Pancreas (tissue), 10 donors: ENCODE measurements at regions of chr10 and their contacts with region 1.

Region 1: DNA sequence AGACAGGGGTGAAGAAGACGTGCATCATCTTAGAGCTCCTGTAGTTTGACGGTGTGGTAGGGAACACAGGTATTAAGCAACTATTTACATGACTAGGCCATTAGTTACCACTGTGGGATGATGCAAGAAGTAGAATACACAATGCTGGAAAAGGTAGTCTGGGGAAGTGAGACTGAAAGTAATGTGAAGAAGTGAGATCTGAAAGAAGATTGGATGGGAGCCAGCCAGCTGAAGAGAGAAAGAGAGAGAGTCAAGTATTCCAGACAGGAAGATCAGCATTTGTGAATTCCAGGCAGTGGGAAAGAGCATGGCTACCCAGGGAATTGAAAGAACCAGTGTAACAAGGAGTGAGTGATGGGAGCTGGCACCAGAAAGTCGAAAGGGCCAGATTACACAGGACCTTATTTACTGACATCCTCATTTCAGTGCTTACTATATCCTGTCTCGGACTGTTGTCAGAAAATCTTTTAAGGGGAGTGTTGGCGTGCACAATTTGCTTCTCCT is 4.0 kb upstream of the CFAP58 start:
- DNase-seq: no peak
- ATAC-seq: peak in 2 of 4 donors; percentile 26 to 53
- H3K4me3 ChIP-seq: no peak overlapping the region
- H3K27ac ChIP-seq: peak overlapping the region in 1 of 4 donors; percentile 33
- H3K4me1 ChIP-seq: peaks cover 0 to 12% (median 0%) of the 10 kb centered on the region in 3 donors
- H3K27me3 ChIP-seq: no peaks in the 10 kb centered on the region
- CTCF ChIP-seq: no peak

Region 2: GRCh38 chr10:104281694-104282093 is 68.0 kb before region 1 on chr10:
- intact Hi-C with region 1: loop called in 1 of 3 experiments (anchors 5 kb)
- DNase-seq: no peak
- ATAC-seq: no peak
- H3K4me3 ChIP-seq: no peak overlapping the region
- H3K27ac ChIP-seq: no peak overlapping the region
- H3K4me1 ChIP-seq: no peaks in the 10 kb centered on the region
- H3K27me3 ChIP-seq: no peaks in the 10 kb centered on the region
- CTCF ChIP-seq: no peak

Region 3: DNA sequence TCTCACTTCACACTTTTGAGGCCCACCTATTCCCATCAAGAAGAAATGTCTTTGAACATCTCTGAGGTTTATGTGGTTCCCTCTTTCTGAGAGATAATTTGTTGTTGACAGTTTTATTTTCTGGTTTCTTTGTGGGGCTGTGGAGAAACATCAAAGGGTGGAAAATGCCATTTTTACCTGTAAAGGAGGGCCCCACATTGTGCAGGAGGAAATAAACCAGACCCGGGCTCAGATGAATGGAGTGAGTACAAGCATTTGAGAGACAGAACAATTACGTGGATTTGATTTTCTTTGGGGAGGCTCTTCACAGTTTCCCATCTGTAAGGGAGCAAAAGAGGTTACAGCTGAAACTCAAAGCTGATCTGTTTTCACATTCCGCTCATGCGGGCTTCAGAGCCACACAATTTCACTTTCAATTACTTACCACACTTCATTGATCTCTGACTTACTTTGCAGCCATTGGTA is 41.2 kb before region 1 on chr10:
- intact Hi-C with region 1: loop called in 2 of 3 experiments (anchors 5 kb)
- DNase-seq: no peak
- ATAC-seq: no peak
- H3K4me3 ChIP-seq: no peak overlapping the region
- H3K27ac ChIP-seq: no peak overlapping the region
- H3K4me1 ChIP-seq: no peaks in the 10 kb centered on the region
- H3K27me3 ChIP-seq: no peaks in the 10 kb centered on the region
- CTCF ChIP-seq: no peak